ENCODE measurements at regions of chr11 and their contacts with region 1.

Region 1: DNA sequence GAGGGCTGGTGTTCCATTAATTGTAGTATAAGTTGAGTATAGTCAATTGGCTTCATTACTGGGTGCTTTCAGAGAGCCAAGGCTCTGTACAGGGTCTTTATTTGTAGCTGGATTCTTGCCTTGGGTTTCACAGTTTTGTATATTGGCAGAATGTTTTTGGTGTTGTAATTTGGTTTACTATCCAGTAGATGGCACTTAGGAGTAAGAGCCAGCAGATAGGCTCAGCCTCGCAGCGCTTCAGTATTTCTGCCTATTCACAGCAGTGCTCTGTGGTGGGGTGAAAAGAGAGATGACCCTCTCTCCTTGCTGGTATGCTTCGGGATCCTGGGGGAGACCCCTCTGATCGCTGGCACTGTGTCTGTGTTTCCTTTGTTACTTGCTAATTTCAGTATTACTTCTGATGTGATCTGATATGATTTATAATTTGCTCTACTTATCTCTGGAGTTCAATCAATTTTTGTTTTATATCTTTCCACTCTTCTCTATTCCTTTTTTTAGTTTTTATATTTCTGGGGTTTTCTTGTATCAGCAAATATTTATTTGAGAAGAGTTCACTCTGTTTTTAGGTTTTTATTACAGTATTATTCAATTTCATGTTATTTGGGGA is 52.2 kb downstream of the ANO5 start:
- DNase-seq: peak; percentile 18
- H3K4me3 ChIP-seq: no peak overlapping the region
- H3K27ac ChIP-seq: no peak overlapping the region
- H3K4me1 ChIP-seq: no peaks in the 10 kb centered on the region
- H3K27me3 ChIP-seq: no peaks in the 10 kb centered on the region
- CTCF ChIP-seq: peak; percentile 69
- EP300 ChIP-seq: no peak
- RAD21 ChIP-seq: peak; percentile 72

Region 2: DNA sequence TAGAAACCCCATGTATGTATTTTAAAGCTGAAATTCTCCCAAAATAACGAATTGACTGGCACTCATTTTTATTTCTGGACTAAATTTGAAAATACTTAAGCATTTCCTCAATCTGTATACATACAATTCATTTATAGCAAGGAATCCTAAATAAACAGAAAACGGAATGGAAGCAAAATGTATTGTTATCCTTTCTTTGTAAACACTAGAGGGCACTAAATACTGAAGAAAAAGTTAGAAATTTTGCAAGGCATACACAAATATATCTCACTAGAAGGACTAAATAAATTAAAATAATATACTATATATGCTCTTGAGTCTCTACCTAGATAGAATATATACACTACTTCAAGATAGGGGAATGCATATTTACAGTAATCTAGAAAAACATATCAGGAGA is 75.3 kb before region 1 on chr11:
- CTCF ChIA-PET with region 1: interaction called, 18 read pairs
- POLR2A ChIA-PET with region 1: no interaction called
- DNase-seq: no peak
- H3K4me3 ChIP-seq: no peak overlapping the region
- H3K27ac ChIP-seq: no peak overlapping the region
- H3K4me1 ChIP-seq: no peaks in the 10 kb centered on the region; a peak in 1 of 4 replicates
- H3K27me3 ChIP-seq: no peaks in the 10 kb centered on the region
- CTCF ChIP-seq: peak; percentile 62
- EP300 ChIP-seq: no peak
- RAD21 ChIP-seq: peak; percentile 63

Region 3: GRCh38 chr11:22256876-22257275 is 11.8 kb after region 1 on chr11:
- CTCF ChIA-PET with region 1: interaction called, 14 read pairs
- POLR2A ChIA-PET with region 1: no interaction called
- DNase-seq: no peak
- H3K4me3 ChIP-seq: no peak overlapping the region
- H3K27ac ChIP-seq: no peak overlapping the region
- H3K4me1 ChIP-seq: no peaks in the 10 kb centered on the region
- H3K27me3 ChIP-seq: no peaks in the 10 kb centered on the region
- CTCF ChIP-seq: no peak
- EP300 ChIP-seq: no peak
- RAD21 ChIP-seq: no peak

Region 4: DNA sequence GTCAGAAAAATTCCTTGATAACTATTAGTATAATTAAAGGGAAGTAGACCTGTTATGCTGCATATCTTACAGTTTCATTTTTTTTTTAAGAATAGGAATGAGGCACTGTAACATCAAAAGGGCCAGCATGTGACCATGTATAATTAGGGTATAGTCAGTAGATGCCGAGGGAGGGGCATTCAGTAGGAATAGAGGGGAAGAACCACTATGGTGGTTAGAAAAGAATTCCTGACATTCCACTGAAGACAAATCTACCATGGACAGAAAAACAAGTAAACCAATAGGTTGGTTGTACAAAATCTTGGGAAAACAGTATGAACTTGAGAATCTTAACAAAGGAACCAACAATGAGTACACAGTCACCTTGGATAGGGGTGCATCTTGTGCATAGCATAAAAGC is 693.6 kb after region 1 on chr11:
- CTCF ChIA-PET with region 1: no interaction called
- POLR2A ChIA-PET with region 1: no interaction called
- DNase-seq: no peak
- H3K4me3 ChIP-seq: no peak overlapping the region
- H3K27ac ChIP-seq: no peak overlapping the region
- H3K4me1 ChIP-seq: no peaks in the 10 kb centered on the region
- H3K27me3 ChIP-seq: no peaks in the 10 kb centered on the region
- CTCF ChIP-seq: no peak
- EP300 ChIP-seq: no peak
- RAD21 ChIP-seq: no peak

Measured in SK-N-SH (cell line).